Activated T-helper 1 cell treated with anti-CD3 and anti-CD28 coated beads, Interleukin-12 subunit alpha, Interleukin-12 subunit beta, Interleukin-2, Interleukin-4 antibody, amounts not matched to agents 30 ng/mL and 10 ng/mL and 1 ng/mL, durations not matched to agents 14 hours and 24 hours and 36 hours (primary cell): ENCODE measurements at regions of chr2 and their contacts with region 1.

Region 1: GRCh38 chr2:219177552-219178376 is at the start of gene RETREG2:
- DNase-seq: peak; percentile 74
- H3K4me3 Mint-ChIP-seq: peak within 1 kb of the TSS; percentile 91
- H3K27ac Mint-ChIP-seq: peak within 1 kb of the TSS; percentile 96
- H3K4me1 Mint-ChIP-seq: peaks cover 72% of the 10 kb centered on the region
- H3K27me3 Mint-ChIP-seq: no peaks in the 10 kb centered on the region
- total RNA-seq, gene RETREG2: 58.4 and 61.5 TPM in 2 replicates

Region 2: DNA sequence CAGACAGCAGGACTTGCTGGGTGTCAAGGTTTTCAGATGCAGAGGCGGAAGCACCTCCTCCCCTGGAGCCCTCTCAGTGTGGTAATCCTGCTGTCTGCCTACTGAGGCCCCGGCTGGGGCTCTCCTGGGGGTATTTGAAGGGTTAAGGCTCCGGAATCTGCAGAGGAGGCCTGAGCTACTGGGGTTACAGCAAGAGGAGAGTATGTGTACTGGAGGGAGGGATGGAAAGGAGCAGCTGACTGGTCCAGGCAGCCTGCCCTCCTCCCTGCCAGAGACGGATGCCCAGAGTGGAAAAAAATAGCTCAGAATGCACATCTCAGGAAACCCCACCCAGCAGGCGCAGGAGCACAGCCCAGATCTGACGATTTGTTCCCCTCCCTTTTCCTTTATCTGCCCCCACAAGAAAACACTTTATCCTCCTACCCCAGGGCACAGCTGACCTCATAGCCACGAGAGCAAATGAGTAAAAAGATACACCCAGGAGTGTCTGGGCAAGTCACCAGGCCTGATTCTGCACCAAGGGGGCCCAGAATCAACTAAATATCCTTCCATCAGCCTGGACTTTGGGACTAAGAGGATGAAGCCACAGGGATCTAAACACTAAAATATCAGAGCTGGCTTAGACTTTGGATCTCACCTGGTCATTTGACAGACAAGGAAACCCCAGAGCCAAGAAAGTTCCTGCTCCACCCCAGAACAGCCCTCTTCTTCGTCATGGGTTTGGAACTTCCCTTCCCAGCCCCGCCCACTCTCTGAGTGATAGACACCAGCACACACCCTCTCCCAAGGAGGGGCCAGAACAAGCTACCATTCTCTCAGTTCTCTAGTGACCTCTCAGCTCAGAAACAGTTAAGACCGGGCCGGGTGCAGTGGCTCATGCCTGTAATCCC is 890.9 kb before region 1 on chr2:
- intact Hi-C with region 1: loop called (anchors 5 kb)
- DNase-seq: peak; percentile 82
- H3K4me3 Mint-ChIP-seq: peak overlapping the region; percentile 94
- H3K27ac Mint-ChIP-seq: peak overlapping the region; percentile 99
- H3K4me1 Mint-ChIP-seq: peaks cover 72% of the 10 kb centered on the region
- H3K27me3 Mint-ChIP-seq: no peaks in the 10 kb centered on the region

Region 3: GRCh38 chr2:219128396-219128795 is 49.4 kb before region 1 on chr2:
- intact Hi-C with region 1: no loop called
- DNase-seq: no peak
- H3K4me3 Mint-ChIP-seq: no peak overlapping the region
- H3K27ac Mint-ChIP-seq: no peak overlapping the region
- H3K4me1 Mint-ChIP-seq: peaks cover 18% of the 10 kb centered on the region
- H3K27me3 Mint-ChIP-seq: no peaks in the 10 kb centered on the region

Region 4: GRCh38 chr2:219206442-219207253 is 28.9 kb after region 1 on chr2 and contains the start of gene ZFAND2B:
- intact Hi-C with region 1: loop called (anchors 1 kb)
- DNase-seq: peak; percentile 96
- H3K4me3 Mint-ChIP-seq: peak within 1 kb of the TSS; percentile 92
- H3K27ac Mint-ChIP-seq: peak within 1 kb of the TSS; percentile 99
- H3K4me1 Mint-ChIP-seq: peaks cover 40% of the 10 kb centered on the region
- H3K27me3 Mint-ChIP-seq: no peaks in the 10 kb centered on the region
- total RNA-seq, gene ZFAND2B: 35.0 and 41.3 TPM in 2 replicates

Region 5: GRCh38 chr2:219229305-219230058 is 51.7 kb after region 1 on chr2 and contains the starts of genes ANKZF1 and ATG9A:
- intact Hi-C with region 1: loop called (anchors 1 kb)
- DNase-seq: peak; percentile 98
- H3K4me3 Mint-ChIP-seq: peak within 1 kb of the TSS; percentile 97
- H3K27ac Mint-ChIP-seq: peak within 1 kb of the TSS; percentile 99
- H3K4me1 Mint-ChIP-seq: peaks cover 47% of the 10 kb centered on the region
- H3K27me3 Mint-ChIP-seq: no peaks in the 10 kb centered on the region
- total RNA-seq, gene ANKZF1: 112 and 117 TPM in 2 replicates
- total RNA-seq, gene ATG9A: 55.3 and 57.0 TPM in 2 replicates

Region 6: GRCh38 chr2:219253753-219254590 is 76.2 kb after region 1 on chr2 and contains the start of gene TUBA4A:
- intact Hi-C with region 1: loop called (anchors 1 kb)
- DNase-seq: peak; percentile 87
- H3K4me3 Mint-ChIP-seq: peak within 1 kb of the TSS; percentile 93
- H3K27ac Mint-ChIP-seq: peak within 1 kb of the TSS; percentile 98
- H3K4me1 Mint-ChIP-seq: peaks cover 50% of the 10 kb centered on the region
- H3K27me3 Mint-ChIP-seq: no peaks in the 10 kb centered on the region
- total RNA-seq, gene TUBA4A: 211 and 217 TPM in 2 replicates